ENCODE measurements at regions of chr19 and their contacts with region 1.

Region 1: GRCh38 chr19:13778398-13778797 is 4.1 kb downstream of the C19orf53 start:
- DNase-seq: no peak
- ATAC-seq: no peak
- H3K4me3 ChIP-seq: no peak overlapping the region
- H3K27ac ChIP-seq: no peak overlapping the region
- H3K4me1 ChIP-seq: 0 out of 2 replicates have a peak, but pooled peaks cover 6% of the 10 kb centered on the region
- H3K27me3 ChIP-seq: no peaks in the 10 kb centered on the region
- CTCF ChIP-seq: no peak

Region 2: DNA sequence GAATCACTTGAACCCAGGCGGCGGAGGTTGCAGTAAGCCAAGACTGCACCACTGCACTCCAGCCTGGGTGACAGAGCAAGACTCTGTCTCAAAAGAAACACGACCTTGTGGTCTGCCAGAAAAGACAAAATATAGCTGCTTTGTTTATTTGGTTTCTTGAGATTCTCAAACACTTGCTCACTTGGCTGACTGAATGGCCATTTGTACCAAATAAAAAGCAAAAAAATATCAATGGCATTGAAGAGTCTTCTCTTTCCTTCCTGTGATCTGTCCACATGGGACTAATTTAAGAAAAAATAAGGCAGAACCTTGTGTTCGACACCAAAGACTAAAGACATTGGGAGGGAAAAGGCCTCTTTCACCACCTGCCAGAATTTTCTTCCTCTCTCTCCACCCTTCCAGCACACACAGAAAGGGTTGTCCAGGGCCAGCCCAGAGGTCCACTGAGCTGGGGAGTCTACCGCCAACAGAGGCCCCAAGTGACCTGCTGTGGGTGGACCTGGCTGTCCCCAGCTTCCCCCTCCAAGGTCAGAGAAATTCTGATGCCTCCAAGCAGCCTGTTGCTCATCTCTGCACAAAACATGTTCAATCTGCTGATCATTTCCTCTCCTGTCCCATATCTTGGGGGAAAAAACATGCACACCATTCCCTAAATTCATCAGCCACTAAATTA is 121.7 kb after region 1 on chr19:
- CTCF ChIA-PET with region 1: no interaction called
- POLR2A ChIA-PET with region 1: no interaction called
- in situ Hi-C with region 1: no loop called
- intact Hi-C with region 1: no loop called
- DNase-seq: no peak
- ATAC-seq: no peak
- H3K4me3 ChIP-seq: no peak overlapping the region
- H3K27ac ChIP-seq: no peak overlapping the region
- H3K4me1 ChIP-seq: no peaks in the 10 kb centered on the region
- H3K27me3 ChIP-seq: no peaks in the 10 kb centered on the region
- CTCF ChIP-seq: no peak

Region 3: DNA sequence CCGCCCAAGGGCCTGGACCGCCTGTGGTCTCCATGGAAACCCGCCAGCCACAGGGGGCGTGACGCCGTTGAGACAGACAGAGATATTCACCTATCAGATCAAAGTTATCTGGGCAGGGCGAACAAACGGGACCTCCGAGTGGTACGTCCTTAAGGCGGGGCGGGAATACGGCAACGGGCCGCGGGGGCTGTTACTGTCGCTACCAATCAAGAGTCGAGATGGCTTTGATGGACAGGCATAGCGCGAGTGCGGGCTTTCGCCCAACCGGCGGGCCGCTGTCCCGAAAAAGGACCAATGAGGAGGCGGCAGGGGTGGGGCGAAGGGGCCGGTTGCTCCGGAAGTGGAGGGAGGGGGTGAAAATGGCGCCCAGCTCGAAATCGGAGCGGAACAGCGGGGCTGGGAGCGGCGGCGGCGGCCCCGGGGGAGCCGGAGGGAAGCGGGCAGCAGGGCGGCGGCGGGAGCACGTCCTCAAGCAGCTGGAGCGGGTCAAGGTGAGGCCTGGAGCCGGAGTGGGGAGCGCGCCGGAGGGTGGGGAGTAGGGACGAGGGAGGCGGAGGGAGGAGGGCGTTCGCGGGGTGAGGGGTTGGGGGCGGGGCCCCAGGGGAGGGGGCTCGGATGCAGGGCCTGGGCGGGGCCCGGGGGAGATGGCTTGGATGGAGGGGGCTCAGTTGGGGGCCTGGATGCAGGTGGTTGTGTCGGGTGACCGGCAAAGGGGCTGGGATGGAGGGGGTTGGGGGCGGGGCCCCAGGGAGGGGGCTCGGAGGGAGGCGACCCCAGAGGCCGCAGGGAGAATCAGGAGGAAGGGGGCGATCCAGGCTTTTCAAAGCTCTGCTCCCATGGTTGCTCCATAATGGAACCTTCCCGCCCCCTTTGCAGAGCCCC is 174.0 kb after region 1 on chr19 and contains the start of gene DCAF15:
- CTCF ChIA-PET with region 1: interaction called, 11 read pairs
- POLR2A ChIA-PET with region 1: no interaction called
- in situ Hi-C with region 1: no loop called
- intact Hi-C with region 1: no loop called
- DNase-seq: peak; percentile 95
- ATAC-seq: peak; percentile 98
- H3K4me3 ChIP-seq: peak within 1 kb of the TSS; percentile 82 to 84
- H3K27ac ChIP-seq: peak within 1 kb of the TSS; percentile 84
- H3K4me1 ChIP-seq: peaks cover 6% of the 10 kb centered on the region
- H3K27me3 ChIP-seq: no peaks in the 10 kb centered on the region
- CTCF ChIP-seq: no peak
- total RNA-seq, gene DCAF15: 38.8 TPM

Region 4: GRCh38 chr19:14081325-14082093 is 303.1 kb after region 1 on chr19:
- CTCF ChIA-PET with region 1: no interaction called
- POLR2A ChIA-PET with region 1: no interaction called
- in situ Hi-C with region 1: no loop called
- intact Hi-C with region 1: no loop called
- DNase-seq: peak; percentile 97
- ATAC-seq: peak; percentile 94
- H3K4me3 ChIP-seq: peak overlapping the region; percentile 71 to 86
- H3K27ac ChIP-seq: peak overlapping the region; percentile 90
- H3K4me1 ChIP-seq: peaks cover 6% of the 10 kb centered on the region
- H3K27me3 ChIP-seq: no peaks in the 10 kb centered on the region
- CTCF ChIP-seq: no peak

Measured in Panc1 (cell line).